Cardiac septum (tissue), 1 donor: ENCODE measurements at regions of chr5 and their contacts with region 1.

Region 1: GRCh38 chr5:9658706-9659105 is 28.6 kb upstream of the TAS2R1 start:
- DNase-seq: no peak

Region 2: GRCh38 chr5:9698125-9698826 is 39.6 kb after region 1 on chr5:
- intact Hi-C with region 1: loop called (anchors 5 kb)
- DNase-seq: no peak